GM10248 (cell line): ENCODE measurements at regions of chr14 and their contacts with region 1.

Region 1: DNA sequence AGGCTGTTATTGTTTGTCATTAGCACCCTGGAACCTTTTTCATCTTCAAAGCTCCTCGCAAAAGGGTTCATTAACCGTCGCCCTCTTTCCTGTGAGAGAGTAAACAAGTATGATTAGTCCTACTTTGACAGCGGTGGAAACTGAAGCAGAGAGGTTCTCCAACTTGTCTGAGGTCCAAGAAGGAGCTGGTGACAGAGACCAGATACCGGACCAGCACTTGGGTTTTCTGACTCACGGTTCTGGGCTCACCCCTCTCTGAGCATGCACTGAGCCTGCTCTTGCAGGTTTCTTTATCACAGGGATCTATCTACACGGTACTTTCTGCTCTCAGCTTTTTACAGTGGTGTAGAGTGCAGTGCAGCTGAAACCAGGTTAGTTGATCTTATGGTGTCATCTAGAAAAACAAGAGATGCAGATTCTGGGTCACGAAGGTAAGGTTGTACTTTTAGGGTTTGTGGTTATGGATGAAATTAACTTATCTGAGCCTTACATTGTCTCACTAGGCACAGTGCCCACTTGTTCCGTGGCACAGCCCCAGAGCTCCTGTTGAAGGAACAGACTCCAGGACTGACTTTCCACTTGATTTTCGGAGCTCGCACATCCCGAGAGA is 62.1 kb downstream of the PPP2R5C start:
- DNase-seq: peak; percentile 41
- CTCF ChIP-seq: no peak

Region 2: GRCh38 chr14:101791919-101792572 is 31.6 kb before region 1 on chr14:
- CTCF ChIA-PET with region 1: no interaction called
- POLR2A ChIA-PET with region 1: no interaction called
- DNase-seq: peak; percentile 40
- CTCF ChIP-seq: no peak

Region 3: DNA sequence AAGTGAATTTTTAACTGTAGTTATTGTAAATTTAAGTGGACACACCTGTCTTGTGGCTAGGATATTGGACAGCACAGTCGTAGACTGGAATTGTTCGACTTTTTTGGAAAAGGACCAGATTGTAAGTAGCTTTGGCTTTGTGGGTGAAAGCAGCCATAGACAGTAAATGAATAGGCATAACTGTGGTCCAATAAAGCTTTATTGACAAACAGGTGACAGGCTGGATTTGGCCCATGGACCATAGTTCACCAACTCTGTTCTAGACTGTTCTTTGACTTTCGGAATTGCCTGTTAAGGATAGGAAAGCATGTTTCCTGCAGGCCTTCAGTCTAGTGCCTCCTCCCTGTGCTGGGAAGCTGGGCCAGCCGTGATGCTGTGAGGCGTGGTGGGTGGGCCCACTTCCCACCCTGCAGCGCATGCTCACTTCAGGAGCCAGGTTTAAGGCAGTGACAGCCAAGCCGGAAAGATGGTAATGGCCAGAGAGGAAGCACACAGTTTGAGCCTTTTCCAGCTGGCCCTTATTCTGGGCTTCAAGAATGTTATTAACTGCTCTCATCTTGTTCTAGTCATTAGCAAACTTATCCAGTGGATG is 10.4 kb before region 1 on chr14:
- CTCF ChIA-PET with region 1: interaction called, 32 read pairs
- POLR2A ChIA-PET with region 1: interaction called, 11 read pairs
- DNase-seq: no peak
- CTCF ChIP-seq: no peak

Region 4: DNA sequence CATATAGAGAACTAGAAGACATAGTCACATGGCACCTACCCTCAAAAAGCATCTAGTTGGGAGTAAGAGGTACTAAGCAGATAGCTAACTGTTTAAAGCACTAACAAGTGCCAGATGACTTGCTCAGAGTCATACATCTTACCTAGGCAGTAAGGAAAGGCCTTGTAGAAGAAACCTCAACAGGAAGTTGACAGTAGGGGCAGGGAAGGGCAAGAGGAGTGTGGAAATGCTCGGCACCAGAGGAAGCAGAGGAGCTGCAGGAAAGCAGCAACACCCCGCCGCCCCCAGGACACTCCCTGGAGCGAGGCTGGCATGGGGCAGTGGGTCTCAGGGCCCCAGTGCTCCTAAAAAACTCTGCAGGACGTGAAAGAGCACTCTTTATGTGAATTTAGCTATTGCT is 30.8 kb after region 1 on chr14:
- CTCF ChIA-PET with region 1: no interaction called
- POLR2A ChIA-PET with region 1: no interaction called
- DNase-seq: no peak
- CTCF ChIP-seq: no peak

Region 5: GRCh38 chr14:102774391-102775153 is 951.0 kb after region 1 on chr14:
- CTCF ChIA-PET with region 1: no interaction called
- POLR2A ChIA-PET with region 1: no interaction called
- DNase-seq: peak; percentile 78
- CTCF ChIP-seq: peak; percentile 68